ENCODE measurements at regions of chr2 and their contacts with region 1.

Region 1: DNA sequence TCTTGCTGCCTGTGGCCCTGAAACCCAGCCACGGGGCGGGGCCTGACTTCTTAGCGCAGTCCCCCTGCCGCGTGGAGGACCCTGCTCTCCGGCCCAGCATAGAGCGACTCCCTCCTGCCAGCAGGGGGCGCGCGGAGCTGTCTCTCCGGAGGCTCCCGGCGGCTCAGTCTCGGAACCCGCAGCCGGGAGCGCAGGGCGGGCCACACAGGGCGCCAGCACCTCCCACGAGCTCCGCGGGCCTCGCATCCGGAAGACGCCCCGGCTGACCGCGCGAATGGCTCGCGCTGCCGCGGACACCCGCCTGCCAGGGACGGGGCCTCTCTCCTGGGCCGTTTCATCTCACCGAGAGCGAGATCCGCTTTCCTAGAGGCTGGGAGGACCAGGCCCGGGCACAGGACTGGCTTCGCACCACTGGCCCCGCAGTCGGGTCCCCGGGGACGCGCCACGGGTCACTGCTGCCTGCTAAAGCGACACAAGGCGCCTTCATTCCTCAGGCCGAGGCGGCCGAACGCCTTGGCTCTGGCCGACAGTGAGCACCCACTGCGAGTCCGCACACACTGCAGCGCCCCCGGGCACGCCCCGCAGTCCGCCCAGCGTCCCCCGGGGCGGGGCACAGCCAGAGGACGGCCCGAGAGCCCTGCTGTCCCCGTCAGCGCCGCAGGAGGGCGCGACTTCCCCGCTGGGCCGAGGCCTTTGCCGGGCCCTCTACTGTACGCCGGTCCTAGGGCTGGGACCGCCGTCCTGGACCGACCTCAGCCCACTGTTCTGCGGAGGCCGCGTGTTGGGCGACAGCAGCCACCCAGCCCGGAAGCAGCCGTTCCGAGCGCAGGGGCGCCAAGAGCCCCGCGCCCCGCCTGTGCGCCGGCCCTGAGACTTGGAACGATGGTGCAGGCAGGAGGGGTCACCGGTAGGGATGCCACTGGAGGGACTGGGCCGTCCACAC is 39.0 kb upstream of the ARHGEF4 start:
- DNase-seq: peak; percentile 89 to 93
- ATAC-seq: peak; percentile 94 to 99 (median 96)
- H3K4me3 ChIP-seq: peak overlapping the region; percentile 57 to 89 (median 78)
- H3K27ac ChIP-seq: peak overlapping the region; percentile 55 to 94 (median 90)
- H3K4me1 ChIP-seq: peaks cover 5 to 14% (median 12%) of the 10 kb centered on the region in 9 donors
- H3K27me3 ChIP-seq: peaks cover 0 to 20% (median 0%) of the 10 kb centered on the region in 7 donors
- CTCF ChIP-seq: peak; percentile 73 to 92 (median 81)

Region 2: GRCh38 chr2:130873700-130874346 is 76.1 kb after region 1 on chr2:
- intact Hi-C with region 1: loop called (anchors 1 to 5 kb)
- DNase-seq: peak; percentile 45 to 70
- ATAC-seq: peak in 7 of 8 donors; percentile 47 to 69 (median 64)
- H3K4me3 ChIP-seq: no peak overlapping the region
- H3K27ac ChIP-seq: no peak overlapping the region
- H3K4me1 ChIP-seq: no peaks in the 10 kb centered on the region
- H3K27me3 ChIP-seq: peaks cover 0 to 39% (median 11%) of the 10 kb centered on the region in 7 donors
- CTCF ChIP-seq: peak; percentile 34 to 71 (median 67)

Region 3: DNA sequence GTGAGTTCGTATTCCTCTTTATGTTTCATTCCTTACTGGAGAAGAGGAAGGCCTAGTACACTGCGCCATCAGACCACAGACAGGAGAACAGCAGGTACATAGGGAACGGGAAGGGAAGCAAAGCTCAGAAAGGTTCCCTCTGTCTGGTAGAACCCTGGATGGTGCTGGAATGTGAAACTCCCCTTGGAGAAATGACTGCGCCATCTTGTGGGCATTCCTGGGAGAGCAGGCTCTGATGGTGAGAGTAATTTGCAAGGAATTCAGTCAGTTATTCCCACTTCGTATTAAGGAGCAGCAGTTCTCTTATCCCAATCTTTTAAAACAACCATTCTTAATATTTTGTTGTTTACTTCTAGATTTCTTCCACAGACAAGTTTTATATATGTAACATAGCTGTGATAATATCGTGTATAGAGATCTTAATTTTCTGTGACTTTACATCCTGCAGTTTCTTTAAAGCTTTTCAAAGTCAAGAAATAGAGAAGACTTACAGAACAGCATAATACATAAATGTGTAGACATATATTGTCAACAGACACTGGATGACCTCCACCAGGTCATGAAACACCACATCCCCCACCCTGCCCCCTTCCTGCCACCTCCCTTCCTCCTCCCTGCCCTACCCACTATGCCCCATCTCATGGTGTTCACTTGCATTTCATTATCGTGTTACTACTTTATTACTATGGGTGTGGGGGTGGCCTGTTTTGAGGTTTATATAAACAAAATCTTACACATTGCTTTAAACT is 122.8 kb after region 1 on chr2:
- intact Hi-C with region 1: loop called in 9 of 10 experiments (anchors 1 to 10 kb)
- DNase-seq: peak; percentile 44 to 46
- ATAC-seq: peak in 4 of 8 donors; percentile 42 to 60 (median 50)
- H3K4me3 ChIP-seq: no peak overlapping the region
- H3K27ac ChIP-seq: no peak overlapping the region
- H3K4me1 ChIP-seq: no peaks in the 10 kb centered on the region
- H3K27me3 ChIP-seq: peaks cover 0 to 29% (median 23%) of the 10 kb centered on the region in 7 donors
- CTCF ChIP-seq: peak; percentile 55 to 84 (median 76)

Region 4: DNA sequence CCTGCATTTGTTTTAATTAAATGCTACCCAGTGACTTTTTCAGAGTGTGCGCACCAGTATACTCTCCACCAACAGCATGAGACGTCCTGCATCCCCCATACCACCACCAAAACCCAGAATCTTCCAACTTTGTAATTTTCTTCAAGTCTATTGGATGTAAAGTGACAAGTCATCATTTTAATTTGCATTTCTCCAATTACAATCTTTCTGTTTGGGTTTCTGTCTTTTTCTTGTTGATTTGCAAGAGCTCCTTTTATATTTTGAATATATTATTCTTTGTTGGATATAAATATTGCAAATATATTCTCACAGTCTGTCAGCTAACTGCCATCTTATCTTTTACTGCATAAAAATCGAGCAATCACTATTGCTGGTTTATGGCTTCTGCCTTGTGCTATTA is 198.9 kb after region 1 on chr2:
- intact Hi-C with region 1: no loop called
- DNase-seq: no peak
- ATAC-seq: no peak
- H3K4me3 ChIP-seq: no peak overlapping the region
- H3K27ac ChIP-seq: no peak overlapping the region
- H3K4me1 ChIP-seq: no peaks in the 10 kb centered on the region
- H3K27me3 ChIP-seq: peaks cover 0 to 36% (median 20%) of the 10 kb centered on the region in 7 donors
- CTCF ChIP-seq: no peak